ENCODE measurements at regions of chr20 and their contacts with region 1.

Region 1: DNA sequence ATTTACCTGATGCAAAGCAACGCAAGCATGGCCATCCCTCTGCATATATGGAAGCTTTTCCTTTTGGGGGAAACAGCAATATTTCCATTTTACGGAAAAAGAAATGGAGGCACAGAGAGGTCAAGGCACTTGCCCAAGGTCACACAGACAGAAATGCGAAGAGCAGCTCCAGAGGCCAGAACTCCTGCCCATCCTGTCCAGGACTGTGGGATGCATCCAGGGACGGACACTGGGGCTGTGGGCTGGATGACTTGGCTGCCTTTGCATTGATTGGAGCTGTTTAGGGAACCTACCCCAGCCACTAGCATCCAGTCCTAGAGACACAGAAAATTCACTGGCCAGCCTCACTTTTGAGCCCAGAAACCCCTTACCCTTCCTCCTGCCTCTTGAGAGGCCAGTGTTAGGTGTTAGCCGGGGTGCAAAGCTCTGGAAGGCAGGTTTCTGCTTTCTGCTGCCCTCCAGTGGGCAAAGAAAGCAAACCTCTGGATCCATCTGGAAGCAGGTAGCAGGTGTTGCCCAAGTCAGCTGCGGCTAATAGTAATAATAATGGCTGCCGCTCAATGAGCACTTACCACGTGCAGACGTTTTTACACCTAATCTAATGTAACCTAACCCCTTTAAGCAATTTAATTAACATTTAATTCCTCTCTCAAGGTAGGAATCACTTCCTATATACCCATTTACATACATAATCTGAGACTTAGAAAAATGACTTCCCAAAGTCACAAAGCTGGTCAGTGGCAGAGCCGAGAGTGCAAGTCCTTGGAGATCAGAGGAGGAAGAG is 31.7 kb upstream of the CCN5 start:
- H3K4me3 ChIP-seq: no peak overlapping the region
- H3K27ac ChIP-seq: no peak overlapping the region
- H3K4me1 ChIP-seq: no peaks in the 10 kb centered on the region; the same call in 1 of the 2 replicates
- CTCF ChIP-seq: peak; percentile 52; the same call in 1 of the 2 replicates

Region 2: GRCh38 chr20:44217342-44218092 is 465.9 kb before region 1 on chr20:
- CTCF ChIA-PET with region 1: interaction called, 25 read pairs
- POLR2A ChIA-PET with region 1: no interaction called
- H3K4me3 ChIP-seq: no peak overlapping the region
- H3K27ac ChIP-seq: no peak overlapping the region
- H3K4me1 ChIP-seq: no peaks in the 10 kb centered on the region
- CTCF ChIP-seq: peak; percentile 85

Region 3: DNA sequence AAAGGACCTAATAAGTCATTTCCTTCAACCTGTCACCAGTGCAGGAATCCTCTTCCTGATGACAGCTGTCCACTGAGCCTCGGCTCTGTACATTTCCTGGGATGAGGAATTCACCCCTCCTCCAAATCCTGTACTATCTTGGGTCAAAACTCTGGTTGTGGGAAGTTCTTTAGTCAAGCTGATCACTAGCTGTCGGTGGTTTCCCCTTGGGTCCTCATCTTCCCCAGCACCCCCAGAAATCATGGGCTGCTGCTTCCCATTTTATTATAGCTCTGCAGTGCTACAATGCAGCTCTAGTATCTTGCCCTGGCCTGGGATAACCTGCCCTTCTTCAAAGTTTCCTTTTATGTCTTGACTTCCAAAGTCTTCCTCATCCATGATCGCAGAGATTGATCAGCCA is 17.4 kb before region 1 on chr20:
- CTCF ChIA-PET with region 1: interaction called, 11 read pairs
- POLR2A ChIA-PET with region 1: no interaction called
- H3K4me3 ChIP-seq: no peak overlapping the region
- H3K27ac ChIP-seq: no peak overlapping the region
- H3K4me1 ChIP-seq: no peaks in the 10 kb centered on the region
- CTCF ChIP-seq: no peak

Region 4: GRCh38 chr20:44733341-44734069 is 50.0 kb after region 1 on chr20:
- CTCF ChIA-PET with region 1: interaction called, 208 read pairs
- POLR2A ChIA-PET with region 1: no interaction called
- H3K4me3 ChIP-seq: no peak overlapping the region
- H3K27ac ChIP-seq: no peak overlapping the region
- H3K4me1 ChIP-seq: peaks cover 7% of the 10 kb centered on the region
- CTCF ChIP-seq: peak; percentile 83

Region 5: DNA sequence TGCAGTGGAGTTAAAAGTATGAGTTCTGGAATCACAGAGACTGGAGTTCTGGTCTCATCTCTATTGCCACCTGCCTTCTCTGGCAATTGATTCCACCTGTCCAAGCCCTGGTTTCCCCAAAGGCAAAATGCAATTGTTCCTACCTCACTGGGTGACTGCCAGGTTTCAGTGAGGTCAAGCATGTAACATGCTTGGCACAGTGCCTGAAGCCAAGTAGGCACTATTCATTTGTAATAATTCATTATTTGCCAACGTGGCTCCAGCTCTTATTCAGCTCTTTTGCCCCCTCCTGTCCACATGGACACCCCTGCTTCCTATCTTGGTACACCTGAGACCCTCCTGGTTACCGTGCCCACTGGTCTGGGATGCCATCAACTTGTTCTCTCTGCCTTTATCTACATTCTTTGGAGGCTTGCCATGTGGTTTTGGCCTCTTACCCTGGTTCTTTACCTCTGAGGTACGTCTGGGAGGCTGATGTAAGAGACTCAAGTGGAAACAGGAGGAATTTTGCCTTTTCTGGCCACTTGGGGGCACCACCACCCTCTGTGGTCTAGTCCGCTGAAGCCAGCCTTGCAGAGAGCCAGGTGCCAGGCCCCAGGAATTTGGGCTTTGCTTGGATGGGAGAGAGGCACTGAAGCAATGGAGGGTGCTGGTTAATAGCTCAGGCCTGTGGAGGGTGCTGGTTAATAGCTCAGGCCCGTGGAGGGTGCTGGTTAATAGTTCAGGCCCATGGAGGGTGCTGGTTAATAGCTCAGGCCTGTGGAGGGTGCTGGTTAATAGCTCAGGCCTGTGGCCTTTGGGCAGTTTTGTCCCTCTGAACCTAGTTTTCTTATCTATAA is 63.9 kb after region 1 on chr20:
- CTCF ChIA-PET with region 1: interaction called, 26 read pairs
- POLR2A ChIA-PET with region 1: no interaction called
- H3K4me3 ChIP-seq: no peak overlapping the region
- H3K27ac ChIP-seq: peak overlapping the region; percentile 24; the same call in 1 of the 2 replicates
- H3K4me1 ChIP-seq: peaks cover 4% of the 10 kb centered on the region; the same call in 1 of the 2 replicates
- CTCF ChIP-seq: peak; percentile 78

Region 6: DNA sequence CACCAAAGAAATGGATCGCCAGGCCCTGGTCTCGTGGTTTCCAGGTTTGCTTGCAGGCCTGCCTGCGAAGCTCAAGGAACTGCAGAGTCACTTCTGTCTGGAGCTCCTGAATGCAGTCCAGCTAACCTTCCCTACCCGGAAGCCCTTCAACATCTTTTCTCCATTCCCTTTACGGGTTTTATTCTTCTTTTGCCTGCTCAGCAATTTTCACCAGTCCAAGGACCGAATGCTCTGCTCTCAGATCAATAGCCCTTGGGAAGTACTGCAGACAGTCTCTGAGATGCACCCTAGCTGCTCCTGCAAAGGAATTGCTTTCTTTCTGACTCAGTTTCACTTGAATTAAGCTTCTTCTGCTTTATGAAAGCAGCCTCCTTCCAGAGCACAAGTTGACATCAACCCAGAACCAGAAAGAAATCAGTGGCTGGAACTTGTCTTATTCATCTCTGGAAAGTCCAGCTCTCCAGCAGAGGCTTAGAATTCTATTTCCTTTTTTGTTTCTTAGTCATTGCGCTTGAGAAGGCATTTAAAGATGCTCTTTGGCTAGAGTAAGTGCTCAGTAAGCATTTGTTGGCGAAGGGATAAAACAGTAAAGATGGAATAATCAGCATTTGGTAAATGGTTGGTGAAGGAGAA is 183.4 kb after region 1 on chr20:
- CTCF ChIA-PET with region 1: interaction called, 34 read pairs
- POLR2A ChIA-PET with region 1: no interaction called
- H3K4me3 ChIP-seq: no peak overlapping the region
- H3K27ac ChIP-seq: no peak overlapping the region
- H3K4me1 ChIP-seq: no peaks in the 10 kb centered on the region
- CTCF ChIP-seq: no peak

Measured in HEK293 (cell line).